ENCODE measurements at regions of chr16 and their contacts with region 1.

Region 1: DNA sequence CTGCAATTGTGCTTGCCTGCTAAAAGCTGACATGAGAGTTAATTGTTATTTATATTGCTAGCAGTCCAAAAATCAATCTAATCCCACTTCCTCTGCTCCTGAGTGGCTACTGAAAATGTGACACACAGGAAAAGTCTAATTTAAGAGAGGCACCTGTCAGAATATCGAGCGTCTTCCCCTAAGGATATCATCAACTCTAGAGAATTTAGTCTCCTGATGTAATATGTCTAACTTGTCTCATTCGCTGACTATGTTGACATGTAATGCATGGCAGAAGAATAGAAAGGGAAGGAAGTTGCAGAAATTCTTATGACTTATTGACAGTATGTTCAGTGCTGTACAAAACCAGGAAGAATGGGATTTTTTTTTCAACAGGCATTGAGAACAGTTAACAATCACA is 893.4 kb upstream of the CDH8 start:
- DNase-seq: no peak
- ATAC-seq: no peak
- H3K4me3 ChIP-seq: no peak overlapping the region
- H3K27ac ChIP-seq: no peak overlapping the region
- H3K4me1 ChIP-seq: no peaks in the 10 kb centered on the region
- H3K27me3 ChIP-seq: no peaks in the 10 kb centered on the region
- CTCF ChIP-seq: no peak

Region 2: GRCh38 chr16:62954144-62955032 is 24.8 kb after region 1 on chr16:
- intact Hi-C with region 1: loop called in 1 of 10 experiments (anchors 1 kb)
- DNase-seq: no peak
- ATAC-seq: no peak
- H3K4me3 ChIP-seq: no peak overlapping the region
- H3K27ac ChIP-seq: no peak overlapping the region
- H3K4me1 ChIP-seq: no peaks in the 10 kb centered on the region
- H3K27me3 ChIP-seq: no peaks in the 10 kb centered on the region
- CTCF ChIP-seq: no peak

Region 3: GRCh38 chr16:63005356-63005755 is 75.8 kb after region 1 on chr16:
- intact Hi-C with region 1: no loop called
- DNase-seq: no peak
- ATAC-seq: no peak
- H3K4me3 ChIP-seq: no peak overlapping the region
- H3K27ac ChIP-seq: no peak overlapping the region
- H3K4me1 ChIP-seq: no peaks in the 10 kb centered on the region
- H3K27me3 ChIP-seq: no peaks in the 10 kb centered on the region
- CTCF ChIP-seq: no peak

Region 4: DNA sequence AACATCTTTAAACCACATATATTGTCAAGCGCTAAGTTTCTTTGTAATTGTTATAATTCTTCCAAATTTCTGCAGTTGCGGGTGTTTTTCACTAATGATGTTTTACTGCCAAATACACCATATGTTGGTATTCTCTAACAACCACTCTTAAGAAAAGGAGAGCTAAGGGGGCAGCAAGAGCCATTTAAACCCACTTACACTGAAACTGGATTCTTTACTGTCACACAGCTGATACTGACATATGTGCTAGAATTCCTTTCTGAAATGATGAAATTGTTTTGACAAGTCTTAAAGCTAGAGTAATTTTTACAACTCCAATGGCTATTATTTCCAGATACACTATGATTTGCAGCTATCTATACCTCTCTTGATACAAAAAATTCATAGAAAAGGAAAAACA is 1709.2 kb after region 1 on chr16:
- intact Hi-C with region 1: no loop called
- DNase-seq: no peak
- ATAC-seq: no peak
- H3K4me3 ChIP-seq: no peak overlapping the region
- H3K27ac ChIP-seq: no peak overlapping the region
- H3K4me1 ChIP-seq: no peaks in the 10 kb centered on the region
- H3K27me3 ChIP-seq: no peaks in the 10 kb centered on the region
- CTCF ChIP-seq: no peak

Measured in heart right ventricle (tissue), 16 donors.